Psoas muscle (tissue), 8 donors: ENCODE measurements at regions of chr13 and their contacts with region 1.

Region 1: DNA sequence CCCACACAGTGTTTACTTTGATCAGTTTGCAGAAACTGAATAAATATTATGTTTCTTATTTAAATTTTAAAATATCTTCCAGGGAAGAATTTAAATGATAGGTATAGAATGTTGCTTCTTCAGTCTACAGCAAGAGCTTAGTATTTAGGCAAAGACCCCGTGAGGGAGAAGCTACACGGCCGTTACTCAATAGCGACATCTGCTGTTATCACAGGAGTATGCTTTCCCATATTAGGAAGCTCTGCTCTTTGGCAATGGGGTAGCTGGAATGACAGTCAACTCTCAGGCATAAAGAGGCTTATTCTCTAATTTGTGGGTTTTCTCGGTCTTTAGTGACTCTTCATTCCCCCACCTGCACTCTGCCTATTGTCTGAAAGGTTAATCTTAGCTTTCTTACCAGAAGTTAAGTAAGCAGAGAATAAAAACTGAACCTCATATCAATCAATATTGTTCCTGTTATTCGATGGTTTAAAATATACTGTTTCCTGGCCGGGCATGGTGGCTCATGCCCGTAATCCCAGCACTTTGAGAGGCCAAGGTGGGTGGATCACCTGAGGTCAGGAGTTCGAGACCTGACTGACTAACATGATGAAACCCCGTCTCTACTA is 13.2 kb upstream of the LHFPL6 start:
- DNase-seq: no peak
- ATAC-seq: peak; percentile 72 to 91 (median 84)
- H3K4me3 ChIP-seq: no peak overlapping the region
- H3K27ac ChIP-seq: no peak overlapping the region
- H3K4me1 ChIP-seq: no peaks in the 10 kb centered on the region
- H3K27me3 ChIP-seq: peaks cover 0 to 3% (median 0%) of the 10 kb centered on the region in 3 donors
- CTCF ChIP-seq: peak; percentile 86

Region 2: DNA sequence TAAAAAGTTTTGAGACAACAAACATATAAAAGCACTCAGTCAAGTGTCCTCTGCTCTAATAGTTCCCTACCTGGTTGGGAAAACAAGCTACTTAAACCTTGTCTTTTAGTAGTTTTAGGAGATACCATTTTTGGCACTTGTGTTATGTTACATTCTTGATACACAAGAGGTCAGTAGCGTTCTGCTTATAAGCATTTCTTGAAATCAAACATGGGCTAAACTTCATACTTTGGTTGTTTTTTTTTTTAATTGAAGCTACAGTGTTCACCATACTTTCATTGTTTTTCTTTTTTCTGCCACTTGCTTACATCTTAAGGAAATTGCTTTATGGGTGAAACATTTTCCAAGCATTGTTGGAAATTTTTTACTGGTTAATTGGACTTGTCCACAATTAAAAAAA is 565.0 kb before region 1 on chr13:
- intact Hi-C with region 1: loop called (anchors 2 to 5 kb)
- DNase-seq: no peak
- ATAC-seq: no peak
- H3K4me3 ChIP-seq: no peak overlapping the region
- H3K27ac ChIP-seq: no peak overlapping the region
- H3K4me1 ChIP-seq: no peaks in the 10 kb centered on the region
- H3K27me3 ChIP-seq: no peaks in the 10 kb centered on the region
- CTCF ChIP-seq: peak; percentile 43

Region 3: GRCh38 chr13:39144941-39145533 is 471.2 kb before region 1 on chr13:
- intact Hi-C with region 1: loop called (anchors 1 to 5 kb)
- DNase-seq: peak; percentile 39 to 56
- ATAC-seq: peak in 3 of 4 donors; percentile 42 to 74 (median 71)
- H3K4me3 ChIP-seq: peak overlapping the region; percentile 12
- H3K27ac ChIP-seq: no peak overlapping the region
- H3K4me1 ChIP-seq: no peaks in the 10 kb centered on the region
- H3K27me3 ChIP-seq: no peaks in the 10 kb centered on the region
- CTCF ChIP-seq: peak; percentile 68

Region 4: DNA sequence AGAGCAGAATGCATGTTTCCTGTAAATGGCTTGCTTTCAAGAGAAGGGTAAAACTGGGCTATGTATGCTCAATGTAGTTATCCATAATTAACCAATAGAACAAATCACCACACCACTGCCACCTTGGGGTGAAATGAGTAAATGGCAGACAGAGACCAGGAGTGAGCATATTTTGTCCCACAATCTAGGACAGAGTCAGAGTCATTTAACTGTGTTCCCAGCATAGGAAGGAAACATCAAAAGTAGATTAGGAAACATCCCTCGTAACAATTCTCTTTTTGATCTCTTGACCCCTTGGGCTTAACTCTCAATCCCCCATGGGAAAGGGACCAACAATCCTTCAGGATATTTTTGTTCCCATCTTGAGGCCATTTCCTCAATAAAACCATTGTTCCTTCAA is 353.2 kb before region 1 on chr13:
- intact Hi-C with region 1: loop called in 1 of 2 experiments (anchors 5 kb)
- DNase-seq: peak in 1 of 2 donors; percentile 13
- ATAC-seq: peak in 3 of 4 donors; percentile 69 to 73 (median 70)
- H3K4me3 ChIP-seq: no peak overlapping the region
- H3K27ac ChIP-seq: no peak overlapping the region
- H3K4me1 ChIP-seq: peaks cover 16% of the 10 kb centered on the region
- H3K27me3 ChIP-seq: no peaks in the 10 kb centered on the region
- CTCF ChIP-seq: peak; percentile 62

Region 5: GRCh38 chr13:39273953-39274738 is 342.0 kb before region 1 on chr13:
- intact Hi-C with region 1: loop called in 1 of 2 experiments (anchors 5 kb)
- DNase-seq: no peak
- ATAC-seq: no peak
- H3K4me3 ChIP-seq: no peak overlapping the region
- H3K27ac ChIP-seq: no peak overlapping the region
- H3K4me1 ChIP-seq: no peaks in the 10 kb centered on the region
- H3K27me3 ChIP-seq: no peaks in the 10 kb centered on the region
- CTCF ChIP-seq: no peak

Region 6: DNA sequence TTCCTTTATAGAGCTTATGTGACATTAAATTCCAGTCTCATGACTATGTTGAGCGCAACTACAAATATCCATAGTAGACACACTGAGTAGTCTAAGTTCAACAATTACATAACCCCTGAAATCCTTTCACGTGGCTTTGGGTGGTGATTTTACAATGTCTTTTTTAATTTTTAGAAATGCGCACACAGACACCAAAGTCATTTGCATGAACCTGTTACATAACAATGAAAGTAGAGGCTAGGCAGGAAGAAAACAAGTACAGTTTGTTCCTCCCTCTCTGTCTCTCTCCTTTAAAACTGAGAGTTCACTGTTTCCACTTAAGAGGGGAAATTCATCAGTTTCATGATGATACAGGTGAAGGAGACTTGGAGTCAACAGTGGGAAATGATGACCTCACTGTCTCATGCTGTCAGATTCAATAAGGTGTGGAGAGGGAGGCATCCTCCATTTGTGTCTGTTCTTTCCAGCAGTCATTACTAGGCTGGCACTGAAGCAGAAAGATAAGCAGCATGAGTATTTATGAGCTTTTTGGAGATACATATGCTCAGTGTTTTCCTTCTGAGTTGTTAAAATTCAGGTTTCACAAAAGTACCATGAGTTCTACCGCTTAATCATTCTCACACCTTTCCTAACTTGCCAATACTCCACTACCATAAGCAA is 215.0 kb before region 1 on chr13:
- intact Hi-C with region 1: no loop called
- DNase-seq: no peak
- ATAC-seq: no peak
- H3K4me3 ChIP-seq: no peak overlapping the region
- H3K27ac ChIP-seq: no peak overlapping the region
- H3K4me1 ChIP-seq: no peaks in the 10 kb centered on the region
- H3K27me3 ChIP-seq: no peaks in the 10 kb centered on the region
- CTCF ChIP-seq: no peak

Region 7: GRCh38 chr13:39415008-39415802 is 201.0 kb before region 1 on chr13:
- intact Hi-C with region 1: loop called (anchors 2 to 5 kb)
- DNase-seq: peak; percentile 41 to 70
- ATAC-seq: peak; percentile 40 to 77 (median 62)
- H3K4me3 ChIP-seq: no peak overlapping the region
- H3K27ac ChIP-seq: peak overlapping the region; percentile 0
- H3K4me1 ChIP-seq: peaks cover 8% of the 10 kb centered on the region
- H3K27me3 ChIP-seq: no peaks in the 10 kb centered on the region
- CTCF ChIP-seq: peak; percentile 48

Region 8: GRCh38 chr13:39510316-39510695 is 105.9 kb before region 1 on chr13:
- intact Hi-C with region 1: no loop called
- DNase-seq: no peak
- ATAC-seq: no peak
- H3K4me3 ChIP-seq: no peak overlapping the region
- H3K27ac ChIP-seq: no peak overlapping the region
- H3K4me1 ChIP-seq: no peaks in the 10 kb centered on the region
- H3K27me3 ChIP-seq: no peaks in the 10 kb centered on the region
- CTCF ChIP-seq: no peak